ENCODE measurements at regions of chr2 and their contacts with region 1.

Region 1: GRCh38 chr2:70142590-70143313 is 48.1 kb downstream of the C2orf42 start:
- DNase-seq: peak; percentile 100
- H3K4me3 ChIP-seq: peak overlapping the region; percentile 49 to 71 (median 62)
- H3K27ac ChIP-seq: peak overlapping the region; percentile 96 to 99 (median 98)
- H3K4me1 ChIP-seq: peaks cover 4 to 46% (median 17%) of the 10 kb centered on the region in 3 donors
- H3K27me3 ChIP-seq: no peaks in the 10 kb centered on the region
- CTCF ChIP-seq: peak; percentile 92 to 100 (median 100)
- POLR2A ChIP-seq: peak in 3 of 4 donors; percentile 52 to 89 (median 61)

Region 2: GRCh38 chr2:69914170-69914960 is 228.4 kb before region 1 on chr2:
- intact Hi-C with region 1: loop called (anchors 2 kb)
- DNase-seq: peak; percentile 100
- H3K4me3 ChIP-seq: peak overlapping the region; percentile 58 to 95 (median 88)
- H3K27ac ChIP-seq: peak overlapping the region; percentile 97 to 99 (median 99)
- H3K4me1 ChIP-seq: peaks cover 6 to 50% (median 13%) of the 10 kb centered on the region in 3 donors
- H3K27me3 ChIP-seq: no peaks in the 10 kb centered on the region
- CTCF ChIP-seq: peak in 1 of 6 experiments; percentile 6
- POLR2A ChIP-seq: peak in 3 of 4 donors; percentile 77 to 92 (median 91)

Region 3: DNA sequence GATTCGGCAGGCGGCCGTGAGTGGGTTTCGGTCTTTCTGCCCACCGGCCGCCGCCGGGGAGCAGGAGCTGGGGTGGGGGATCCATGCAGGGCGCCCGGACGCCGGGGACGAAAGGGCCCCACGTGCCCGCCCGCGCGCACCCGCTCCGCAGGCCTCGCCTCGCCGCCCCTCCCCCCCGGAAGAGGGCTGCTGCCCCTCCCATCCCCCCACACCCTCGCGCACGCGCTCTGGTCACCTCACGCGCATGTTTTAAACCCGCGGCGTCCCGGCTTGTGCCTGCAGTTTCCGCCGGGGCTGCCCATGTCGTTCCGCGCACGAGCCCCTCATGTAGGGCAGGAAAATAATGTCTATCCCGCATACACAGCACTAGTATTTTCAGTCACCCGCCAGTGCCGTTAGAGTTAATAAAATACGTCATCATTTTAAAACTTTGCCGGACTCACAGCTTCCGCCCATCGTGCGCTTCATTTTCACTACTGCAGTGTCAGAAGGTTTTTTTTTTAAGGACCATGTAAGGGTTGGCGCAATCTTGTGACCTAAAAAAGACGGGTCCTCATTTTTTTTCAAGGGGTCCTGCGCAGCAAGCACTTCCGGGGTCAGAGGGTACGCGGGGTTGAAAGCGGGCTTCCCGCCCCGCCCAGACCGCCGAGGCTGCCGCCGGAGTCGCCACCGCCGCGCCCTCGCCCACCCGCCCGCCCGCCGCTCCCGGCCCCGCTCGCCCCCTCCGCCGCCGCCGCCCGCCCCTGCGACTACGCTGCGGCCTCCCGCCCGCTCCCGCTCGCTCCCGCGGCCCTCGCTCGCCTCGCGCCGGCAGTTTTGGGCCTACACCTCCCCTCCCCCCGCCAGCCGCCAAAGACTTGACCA is 55.7 kb before region 1 on chr2 and contains the start of gene PCBP1:
- intact Hi-C with region 1: loop called (anchors 5 kb)
- DNase-seq: peak; percentile 84
- H3K4me3 ChIP-seq: peak within 1 kb of the TSS; percentile 67 to 91 (median 68)
- H3K27ac ChIP-seq: peak within 1 kb of the TSS; percentile 98 to 100 (median 100)
- H3K4me1 ChIP-seq: peaks cover 30 to 66% (median 43%) of the 10 kb centered on the region in 3 donors
- H3K27me3 ChIP-seq: no peaks in the 10 kb centered on the region
- CTCF ChIP-seq: peak in 1 of 6 experiments; percentile 20
- POLR2A ChIP-seq: peak in 2 of 4 donors; percentile 84 to 93
- total RNA-seq, gene PCBP1: 96.8 to 205 (median 177) TPM